Heart left ventricle (tissue), 16 donors: ENCODE measurements at regions of chr5 and their contacts with region 1.

Region 1: GRCh38 chr5:142660731-142661130 is 25.2 kb downstream of the FGF1 start:
- DNase-seq: no peak
- ATAC-seq: no peak
- H3K4me3 ChIP-seq: no peak overlapping the region
- H3K27ac ChIP-seq: peak overlapping the region in 1 of 12 donors; percentile 9
- H3K4me1 ChIP-seq: peaks cover 0 to 29% (median 7%) of the 10 kb centered on the region in 12 donors
- H3K27me3 ChIP-seq: no peaks in the 10 kb centered on the region
- CTCF ChIP-seq: no peak
- POLR2A ChIP-seq: no peak

Region 2: GRCh38 chr5:142688281-142688989 is 27.7 kb after region 1 on chr5:
- intact Hi-C with region 1: loop called in 1 of 10 experiments (anchors 1 kb)
- DNase-seq: no peak
- ATAC-seq: peak in 3 of 4 donors; percentile 30 to 65 (median 53)
- H3K4me3 ChIP-seq: peak overlapping the region in 1 of 12 donors; percentile 11
- H3K27ac ChIP-seq: peak overlapping the region in 11 of 12 donors; percentile 17 to 88 (median 56)
- H3K4me1 ChIP-seq: peaks cover 0 to 74% (median 49%) of the 10 kb centered on the region in 12 donors
- H3K27me3 ChIP-seq: no peaks in the 10 kb centered on the region
- CTCF ChIP-seq: no peak
- POLR2A ChIP-seq: no peak

Region 3: GRCh38 chr5:142977363-142978051 is 316.8 kb after region 1 on chr5:
- intact Hi-C with region 1: no loop called
- DNase-seq: peak in 1 of 5 donors; percentile 27
- ATAC-seq: peak in 2 of 4 donors; percentile 23 to 36
- H3K4me3 ChIP-seq: no peak overlapping the region
- H3K27ac ChIP-seq: peak overlapping the region in 3 of 12 donors; percentile 20 to 79 (median 27)
- H3K4me1 ChIP-seq: peaks cover 10 to 92% (median 32%) of the 10 kb centered on the region in 12 donors
- H3K27me3 ChIP-seq: no peaks in the 10 kb centered on the region
- CTCF ChIP-seq: no peak
- POLR2A ChIP-seq: no peak

Region 4: DNA sequence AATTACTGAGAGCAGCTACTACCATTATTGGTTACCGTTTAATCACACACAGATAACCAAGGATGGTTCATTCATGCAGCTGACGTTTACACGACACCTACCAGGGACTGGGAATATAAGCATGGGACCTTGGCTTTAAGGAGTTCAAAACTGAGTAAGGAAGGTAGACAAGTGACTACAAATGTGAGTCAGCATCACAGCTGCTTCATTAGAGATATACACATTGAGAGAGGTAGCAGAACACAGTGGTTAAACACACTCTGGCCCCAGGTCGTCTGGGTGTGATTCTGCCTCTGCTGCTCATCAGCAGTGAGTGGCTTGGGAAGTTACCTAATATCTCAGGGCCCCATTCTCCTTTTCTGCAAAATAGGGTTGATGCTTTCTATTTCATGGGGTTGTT is 474.2 kb after region 1 on chr5:
- intact Hi-C with region 1: no loop called
- DNase-seq: no peak
- ATAC-seq: no peak
- H3K4me3 ChIP-seq: no peak overlapping the region
- H3K27ac ChIP-seq: peak overlapping the region in 6 of 12 donors; percentile 7 to 52 (median 30)
- H3K4me1 ChIP-seq: peaks cover 4 to 77% (median 46%) of the 10 kb centered on the region in 12 donors
- H3K27me3 ChIP-seq: no peaks in the 10 kb centered on the region
- CTCF ChIP-seq: no peak
- POLR2A ChIP-seq: no peak

Region 5: DNA sequence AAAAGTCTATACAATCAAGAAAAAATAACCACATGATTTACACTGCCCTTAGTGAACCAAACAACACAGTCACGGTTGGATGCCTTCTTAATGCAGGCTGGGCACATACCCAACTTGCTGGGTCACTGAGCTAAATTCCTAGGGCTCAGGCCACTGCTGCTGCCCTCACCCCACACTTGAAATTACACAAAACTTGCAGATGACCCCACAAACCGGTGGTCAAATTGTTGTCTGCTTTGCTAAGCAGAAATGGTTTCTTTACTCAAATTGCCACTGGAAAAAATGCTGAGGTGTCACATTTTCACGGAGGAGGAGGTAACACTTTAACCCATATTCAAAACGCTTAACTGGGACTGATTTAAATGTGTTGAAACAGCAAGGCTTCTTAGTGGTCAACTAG is 1213.6 kb after region 1 on chr5:
- intact Hi-C with region 1: no loop called
- DNase-seq: no peak
- ATAC-seq: peak in 1 of 4 donors; percentile 56
- H3K4me3 ChIP-seq: no peak overlapping the region
- H3K27ac ChIP-seq: no peak overlapping the region
- H3K4me1 ChIP-seq: peaks cover 0 to 3% (median 0%) of the 10 kb centered on the region in 12 donors
- H3K27me3 ChIP-seq: no peaks in the 10 kb centered on the region
- CTCF ChIP-seq: no peak
- POLR2A ChIP-seq: no peak